Mammary epithelial cell (primary cell): ENCODE measurements at regions of chr1 and their contacts with region 1.

Region 1: DNA sequence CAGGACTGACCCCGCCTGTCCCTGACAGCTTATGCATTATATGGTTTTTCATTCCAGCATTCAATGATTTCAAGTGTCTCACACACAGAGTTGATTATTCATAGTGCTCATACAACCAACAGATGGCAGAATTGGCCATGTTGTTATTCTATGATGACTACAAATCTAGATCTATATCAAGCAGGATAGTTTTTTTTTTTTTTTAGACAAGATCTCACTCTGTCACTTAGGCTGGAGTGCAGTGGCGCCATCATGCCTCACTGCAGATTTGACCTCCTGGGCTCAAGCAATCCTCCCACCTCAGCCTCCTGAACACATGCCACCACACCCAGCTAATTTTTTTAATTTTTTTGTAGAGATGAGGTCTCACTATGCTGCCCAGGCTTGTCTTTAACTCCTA is 40.1 kb upstream of the LRRC8D start:
- DNase-seq: peak; percentile 50
- H3K4me3 ChIP-seq: no peak overlapping the region
- H3K27ac ChIP-seq: no peak overlapping the region
- H3K4me1 ChIP-seq: no peaks in the 10 kb centered on the region
- H3K27me3 ChIP-seq: no peaks in the 10 kb centered on the region
- CTCF ChIP-seq: peak; percentile 44 to 55

Region 2: DNA sequence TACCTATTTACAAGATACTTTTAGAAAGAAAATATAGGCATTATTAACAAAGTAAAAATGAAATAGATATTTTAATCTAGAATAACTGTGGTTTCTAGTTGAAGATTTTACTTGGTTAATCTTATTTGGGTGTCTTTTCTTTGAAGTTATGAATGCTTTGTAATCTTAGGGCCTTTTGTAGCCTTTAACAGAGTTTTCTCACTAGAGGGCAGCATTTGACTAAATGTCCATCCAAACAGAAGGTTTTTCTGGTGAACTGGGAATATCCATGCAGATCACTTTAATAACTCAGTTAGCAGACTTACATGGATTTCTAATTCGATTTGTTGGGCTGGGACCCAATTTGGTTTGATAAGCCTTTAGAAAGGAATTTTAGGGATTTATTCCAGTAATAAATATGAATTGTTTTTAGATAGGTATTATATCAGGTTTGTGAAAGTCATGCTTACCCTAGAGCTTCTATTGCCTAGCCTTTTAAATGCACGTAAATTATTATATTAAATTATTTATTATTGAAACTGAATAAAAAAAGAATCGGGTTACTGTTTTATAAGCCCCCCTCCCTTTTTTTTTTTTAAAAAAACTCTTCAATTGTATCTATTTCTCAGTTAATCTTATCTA is 333.9 kb after region 1 on chr1:
- CTCF ChIA-PET with region 1: no interaction called
- dilution Hi-C with region 1: no loop called
- in situ Hi-C with region 1: no loop called
- intact Hi-C with region 1: loop called (anchors 5 kb)
- DNase-seq: peak; percentile 41
- H3K4me3 ChIP-seq: no peak overlapping the region
- H3K27ac ChIP-seq: no peak overlapping the region
- H3K4me1 ChIP-seq: no peaks in the 10 kb centered on the region
- H3K27me3 ChIP-seq: no peaks in the 10 kb centered on the region
- CTCF ChIP-seq: peak; percentile 59 to 74

Region 3: DNA sequence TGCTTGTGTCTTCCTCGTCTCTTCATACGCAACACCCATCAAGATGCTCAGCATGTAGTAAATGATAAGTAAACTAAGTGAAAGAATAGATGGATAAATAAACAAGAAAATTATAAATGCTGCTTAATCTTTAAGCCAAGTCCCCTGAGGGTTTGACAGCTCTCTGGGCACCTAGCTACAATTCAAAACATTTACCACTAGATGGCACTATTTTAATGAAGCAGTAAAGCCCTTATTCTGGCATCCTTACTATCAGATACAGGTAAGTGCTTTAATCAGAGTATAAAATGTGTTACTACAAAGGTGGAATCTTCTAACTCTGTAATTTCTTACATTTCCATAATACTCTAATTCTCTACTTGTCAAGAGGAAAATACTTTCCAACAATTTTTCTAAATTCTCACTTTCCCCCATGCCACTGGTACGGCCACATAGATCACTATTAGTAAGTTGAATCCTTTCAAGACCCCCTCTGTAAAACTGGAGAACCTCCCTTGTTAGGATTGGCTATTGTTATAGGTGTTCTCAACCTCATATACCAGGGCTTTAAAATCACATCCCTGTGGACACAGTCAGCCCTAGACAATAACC is 798.6 kb after region 1 on chr1:
- CTCF ChIA-PET with region 1: interaction called, 5 read pairs
- dilution Hi-C with region 1: no loop called
- in situ Hi-C with region 1: loop called in 1 of 2 experiments (anchors 25 kb)
- intact Hi-C with region 1: no loop called
- DNase-seq: peak; percentile 21
- H3K4me3 ChIP-seq: no peak overlapping the region
- H3K27ac ChIP-seq: no peak overlapping the region
- H3K4me1 ChIP-seq: peaks cover 11% of the 10 kb centered on the region
- H3K27me3 ChIP-seq: peaks cover 2% of the 10 kb centered on the region
- CTCF ChIP-seq: peak; percentile 61